ENCODE measurements at regions of chr15 and their contacts with region 1.

Region 1: GRCh38 chr15:28876039-28876844 is 9.5 kb upstream of the APBA2 start:
- DNase-seq: peak in 4 of 10 donors; percentile 50 to 90 (median 83)

Region 2: GRCh38 chr15:29097971-29098370 is 221.7 kb after region 1 on chr15:
- intact Hi-C with region 1: loop called (anchors 5 kb)
- DNase-seq: peak in 2 of 10 donors; percentile 66 to 79

Measured in posterior cingulate gyrus (tissue), 11 donors.